ENCODE measurements at regions of chr13 and their contacts with region 1.

Region 1: GRCh38 chr13:23433171-23434153 is at the start of gene SACS:
- ATAC-seq: peak; percentile 70 to 91 (median 88)
- H3K4me3 ChIP-seq: peak within 1 kb of the TSS; percentile 53 to 93 (median 73)
- H3K27ac ChIP-seq: peak within 1 kb of the TSS; percentile 95 to 97
- H3K4me1 ChIP-seq: peaks cover 23 to 30% of the 10 kb centered on the region in 2 donors
- total RNA-seq, gene SACS: 21.3 to 73.2 (median 36.2) TPM

Region 2: GRCh38 chr13:23348262-23349127 is 85.0 kb before region 1 on chr13:
- in situ Hi-C with region 1: loop called in 1 of 9 experiments (anchors 25 kb)
- ATAC-seq: peak in 3 of 8 experiments; percentile 6 to 88 (median 62)
- H3K4me3 ChIP-seq: no peak overlapping the region
- H3K27ac ChIP-seq: no peak overlapping the region
- H3K4me1 ChIP-seq: no peaks in the 10 kb centered on the region

Region 3: DNA sequence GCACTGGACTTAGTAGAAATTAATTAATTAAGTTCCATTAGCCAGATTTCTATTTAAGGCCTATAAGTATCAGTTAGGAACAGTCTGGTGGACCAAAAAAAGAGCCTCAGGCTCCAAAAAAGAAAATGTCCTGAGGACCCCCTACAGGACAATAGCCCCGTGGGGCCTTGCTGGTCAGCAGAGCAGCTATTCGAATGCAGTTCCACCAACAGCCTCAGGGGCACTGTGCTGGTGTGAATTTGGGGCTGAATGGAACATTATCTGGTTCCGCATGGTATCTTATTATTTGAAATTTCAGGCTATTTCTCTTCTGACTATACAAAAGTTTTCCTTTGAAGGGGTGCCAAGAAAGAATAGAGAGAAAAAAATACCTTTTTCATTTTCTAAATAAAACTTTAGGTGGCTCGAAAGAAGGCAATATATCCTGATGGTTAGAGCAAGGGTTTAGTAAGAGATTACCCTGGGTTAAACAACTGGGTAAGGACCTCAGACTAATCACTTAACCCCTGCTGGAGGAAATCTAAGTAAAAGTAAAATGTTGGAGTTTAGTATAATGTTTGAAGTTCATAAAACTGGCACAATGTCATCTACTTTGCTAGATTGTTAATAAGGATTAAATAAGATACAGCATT is 308.5 kb after region 1 on chr13:
- in situ Hi-C with region 1: no loop called
- ATAC-seq: no peak
- H3K4me3 ChIP-seq: no peak overlapping the region
- H3K27ac ChIP-seq: no peak overlapping the region
- H3K4me1 ChIP-seq: no peaks in the 10 kb centered on the region